Sciatic nerve (tissue), 2 donors: ENCODE measurements at regions of chr4 and their contacts with region 1.

Region 1: GRCh38 chr4:61984260-61984909 is 784.3 kb downstream of the ADGRL3 start:
- DNase-seq: no peak
- ATAC-seq: no peak

Region 2: DNA sequence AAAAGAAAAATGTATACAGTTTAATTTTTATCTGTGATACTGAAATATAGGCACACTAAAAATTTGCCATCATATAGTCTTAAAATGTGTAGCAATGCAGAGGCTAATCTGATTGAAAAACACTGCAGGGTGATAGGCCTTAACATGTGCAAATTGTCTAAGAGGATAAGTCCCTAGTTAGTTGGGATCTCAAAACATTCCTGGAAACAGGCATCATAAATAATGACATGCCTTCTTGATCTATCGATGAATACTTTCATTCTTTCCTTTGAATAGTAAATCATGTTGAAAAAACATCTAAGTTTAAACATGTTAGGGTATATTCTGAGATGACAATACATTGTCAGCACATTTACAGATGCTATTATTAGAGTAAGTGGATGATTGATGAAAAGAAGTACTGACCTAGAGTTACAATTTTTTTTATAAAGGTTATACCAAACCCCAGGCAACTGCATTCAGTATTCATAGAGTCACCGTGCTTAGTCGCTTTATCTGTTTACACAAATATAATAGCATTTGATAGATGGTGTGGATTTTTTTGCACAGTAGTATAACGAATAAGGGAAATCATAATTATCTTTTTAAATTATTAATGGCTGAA is 1452.5 kb before region 1 on chr4:
- intact Hi-C with region 1: no loop called
- DNase-seq: no peak
- ATAC-seq: no peak

Region 3: GRCh38 chr4:60683973-60684372 is 1300.4 kb before region 1 on chr4:
- intact Hi-C with region 1: loop called (anchors 5 kb)
- DNase-seq: no peak
- ATAC-seq: no peak

Region 4: GRCh38 chr4:62053974-62054373 is 69.6 kb after region 1 on chr4:
- intact Hi-C with region 1: no loop called
- DNase-seq: no peak
- ATAC-seq: no peak

Region 5: GRCh38 chr4:62260254-62260653 is 275.9 kb after region 1 on chr4:
- intact Hi-C with region 1: no loop called
- DNase-seq: no peak
- ATAC-seq: no peak

Region 6: DNA sequence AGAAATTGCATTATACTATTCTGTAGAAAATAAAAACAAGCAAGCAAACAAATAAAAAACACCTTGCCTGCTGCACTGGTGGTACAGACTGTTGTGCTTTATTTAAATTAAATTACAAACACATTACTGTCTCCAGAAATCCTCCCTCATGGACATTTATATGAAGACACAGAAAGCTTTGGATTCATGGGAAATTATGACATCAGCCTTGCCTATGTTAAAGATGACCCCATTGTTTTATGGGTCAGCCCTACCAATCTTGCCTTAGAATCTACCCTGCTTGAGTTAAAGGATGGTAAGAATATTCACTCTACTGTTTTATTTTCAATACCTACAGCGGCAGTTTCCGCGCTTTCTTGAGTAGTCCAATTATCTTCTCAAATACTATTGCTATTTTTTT is 1045.0 kb after region 1 on chr4:
- intact Hi-C with region 1: no loop called
- DNase-seq: no peak
- ATAC-seq: no peak